ENCODE measurements at regions of chr14 and their contacts with region 1.

Region 1: GRCh38 chr14:72291908-72292688 is 359.9 kb downstream of the RGS6 start:
- DNase-seq: peak; percentile 58
- ATAC-seq: peak; percentile 97
- H3K4me3 ChIP-seq: no peak overlapping the region
- H3K27ac ChIP-seq: no peak overlapping the region
- H3K4me1 ChIP-seq: no peaks in the 10 kb centered on the region
- H3K27me3 ChIP-seq: no peaks in the 10 kb centered on the region
- CTCF ChIP-seq: peak; percentile 61
- POLR2A ChIP-seq: no peak
- RAD21 ChIP-seq: peak; percentile 44

Region 2: GRCh38 chr14:71166180-71166790 is 1125.8 kb before region 1 on chr14:
- CTCF ChIA-PET with region 1: no interaction called
- POLR2A ChIA-PET with region 1: interaction called, 3 read pairs
- dilution Hi-C with region 1: no loop called
- in situ Hi-C with region 1: no loop called
- intact Hi-C with region 1: loop called (anchors 10 kb)
- DNase-seq: peak; percentile 85
- ATAC-seq: peak; percentile 89
- H3K4me3 ChIP-seq: no peak overlapping the region
- H3K27ac ChIP-seq: no peak overlapping the region
- H3K4me1 ChIP-seq: peaks cover 10% of the 10 kb centered on the region
- H3K27me3 ChIP-seq: no peaks in the 10 kb centered on the region
- CTCF ChIP-seq: peak; percentile 93
- POLR2A ChIP-seq: no peak
- RAD21 ChIP-seq: peak; percentile 85

Region 3: DNA sequence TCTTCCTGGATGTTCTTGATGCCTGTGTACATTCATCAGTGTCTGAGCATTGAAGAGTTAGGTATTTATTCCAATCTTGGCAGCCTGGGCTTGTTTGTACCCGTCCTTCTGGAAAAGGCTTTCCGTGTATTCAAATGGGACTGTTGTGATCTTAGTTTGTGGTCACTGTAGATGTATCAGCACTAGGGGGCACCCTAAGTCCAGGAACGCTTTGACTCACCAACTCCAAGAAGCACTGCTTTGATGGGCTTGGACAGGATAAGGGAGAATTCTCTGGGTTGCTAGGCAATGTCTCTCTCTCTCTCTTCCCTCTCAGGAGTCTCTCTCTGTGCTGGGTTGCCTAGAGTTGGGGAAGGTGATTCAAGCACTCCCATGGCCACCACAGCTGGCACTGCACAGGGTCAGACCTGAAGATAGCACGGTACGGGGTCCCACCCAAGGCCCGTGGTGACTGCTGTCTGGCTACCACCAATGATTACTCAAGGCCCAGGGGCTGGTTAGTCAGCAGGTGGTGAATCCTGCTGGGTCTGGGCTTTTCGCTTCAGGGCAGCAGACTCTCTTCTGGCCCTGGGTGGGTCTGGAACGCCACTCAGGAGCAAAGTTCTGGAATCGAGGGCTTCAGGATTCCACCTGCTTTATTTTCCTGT is 571.0 kb before region 1 on chr14:
- CTCF ChIA-PET with region 1: no interaction called
- POLR2A ChIA-PET with region 1: no interaction called
- dilution Hi-C with region 1: no loop called
- in situ Hi-C with region 1: loop called (anchors 10 kb)
- intact Hi-C with region 1: no loop called
- DNase-seq: peak; percentile 85
- ATAC-seq: peak; percentile 92
- H3K4me3 ChIP-seq: no peak overlapping the region
- H3K27ac ChIP-seq: no peak overlapping the region
- H3K4me1 ChIP-seq: peaks cover 13% of the 10 kb centered on the region
- H3K27me3 ChIP-seq: no peaks in the 10 kb centered on the region
- CTCF ChIP-seq: peak; percentile 84
- POLR2A ChIP-seq: 0 out of 2 replicates have a peak, but pooled peaks have one; percentile 42
- RAD21 ChIP-seq: peak; percentile 89